B cell (primary cell): ENCODE measurements at regions of chr2 and their contacts with region 1.

Region 1: GRCh38 chr2:182666674-182667314 is 49.3 kb upstream of the DNAJC10 start:
- DNase-seq: peak; percentile 68
- ATAC-seq: peak; percentile 72
- H3K4me3 ChIP-seq: no peak overlapping the region
- H3K4me3 Mint-ChIP-seq: no peak overlapping the region
- H3K27ac ChIP-seq: no peak overlapping the region
- H3K27ac Mint-ChIP-seq: no peak overlapping the region
- H3K4me1 ChIP-seq: peaks cover 4% of the 10 kb centered on the region in 2 donors
- H3K4me1 Mint-ChIP-seq: peaks cover 8% of the 10 kb centered on the region
- H3K27me3 ChIP-seq: no peaks in the 10 kb centered on the region
- H3K27me3 Mint-ChIP-seq: no peaks in the 10 kb centered on the region
- CTCF ChIP-seq: peak; percentile 73

Region 2: DNA sequence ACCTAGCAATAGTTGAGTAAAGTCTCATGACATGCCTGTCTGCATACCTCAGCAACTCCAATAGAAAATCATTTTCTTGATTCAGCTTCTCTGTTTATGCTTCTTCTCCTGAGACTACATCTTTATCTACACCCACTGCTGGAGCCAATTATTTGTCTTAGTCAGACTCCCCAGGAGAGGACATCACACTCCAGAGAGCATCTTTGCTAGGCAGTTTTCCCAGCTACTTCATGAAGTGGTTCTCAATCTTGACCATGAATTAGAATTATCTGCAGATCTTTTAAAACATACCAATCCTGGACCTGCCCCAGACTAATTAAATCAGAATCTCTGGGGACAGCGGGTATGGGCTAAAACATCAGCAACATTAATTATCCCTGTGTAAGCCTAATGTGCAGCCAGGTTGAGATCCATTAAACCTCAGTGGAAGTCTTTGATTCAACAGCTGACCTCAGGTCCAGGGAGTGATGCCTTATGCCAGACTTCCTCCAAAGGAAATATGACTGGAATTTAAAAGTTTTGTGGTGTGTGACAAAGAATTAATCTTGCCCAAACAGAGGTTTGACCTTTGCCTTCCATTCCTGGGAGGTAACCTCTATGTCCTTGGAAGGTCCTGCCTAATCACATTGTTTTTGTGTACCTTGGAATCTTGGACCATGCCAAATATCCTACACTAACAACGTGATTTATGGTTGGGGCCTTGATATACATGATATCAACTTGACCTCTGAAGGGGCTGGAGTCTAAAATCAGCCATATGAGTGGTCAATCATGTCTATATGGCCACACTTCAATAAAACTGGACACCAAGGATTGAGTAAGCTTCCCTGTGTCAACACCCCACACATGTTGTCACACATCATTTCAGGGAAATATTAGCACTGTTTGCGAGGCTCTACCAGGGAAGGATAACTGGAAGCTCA is 50.1 kb before region 1 on chr2:
- CTCF ChIA-PET with region 1: no interaction called
- POLR2A ChIA-PET with region 1: no interaction called
- intact Hi-C with region 1: no loop called
- DNase-seq: no peak
- ATAC-seq: no peak
- H3K4me3 ChIP-seq: no peak overlapping the region
- H3K4me3 Mint-ChIP-seq: no peak overlapping the region
- H3K27ac ChIP-seq: no peak overlapping the region
- H3K27ac Mint-ChIP-seq: no peak overlapping the region
- H3K4me1 ChIP-seq: no peaks in the 10 kb centered on the region
- H3K4me1 Mint-ChIP-seq: no peaks in the 10 kb centered on the region
- H3K27me3 ChIP-seq: no peaks in the 10 kb centered on the region
- H3K27me3 Mint-ChIP-seq: no peaks in the 10 kb centered on the region
- CTCF ChIP-seq: no peak

Region 3: GRCh38 chr2:182740701-182741100 is 73.9 kb after region 1 on chr2:
- CTCF ChIA-PET with region 1: interaction called, 14 read pairs
- POLR2A ChIA-PET with region 1: no interaction called
- intact Hi-C with region 1: loop called (anchors 5 kb)
- DNase-seq: no peak
- ATAC-seq: no peak
- H3K4me3 ChIP-seq: no peak overlapping the region
- H3K4me3 Mint-ChIP-seq: no peak overlapping the region
- H3K27ac ChIP-seq: peak overlapping the region in 1 of 2 donors; percentile 25
- H3K27ac Mint-ChIP-seq: no peak overlapping the region
- H3K4me1 ChIP-seq: no peaks in the 10 kb centered on the region
- H3K4me1 Mint-ChIP-seq: no peaks in the 10 kb centered on the region
- H3K27me3 ChIP-seq: no peaks in the 10 kb centered on the region
- H3K27me3 Mint-ChIP-seq: no peaks in the 10 kb centered on the region
- CTCF ChIP-seq: no peak

Region 4: DNA sequence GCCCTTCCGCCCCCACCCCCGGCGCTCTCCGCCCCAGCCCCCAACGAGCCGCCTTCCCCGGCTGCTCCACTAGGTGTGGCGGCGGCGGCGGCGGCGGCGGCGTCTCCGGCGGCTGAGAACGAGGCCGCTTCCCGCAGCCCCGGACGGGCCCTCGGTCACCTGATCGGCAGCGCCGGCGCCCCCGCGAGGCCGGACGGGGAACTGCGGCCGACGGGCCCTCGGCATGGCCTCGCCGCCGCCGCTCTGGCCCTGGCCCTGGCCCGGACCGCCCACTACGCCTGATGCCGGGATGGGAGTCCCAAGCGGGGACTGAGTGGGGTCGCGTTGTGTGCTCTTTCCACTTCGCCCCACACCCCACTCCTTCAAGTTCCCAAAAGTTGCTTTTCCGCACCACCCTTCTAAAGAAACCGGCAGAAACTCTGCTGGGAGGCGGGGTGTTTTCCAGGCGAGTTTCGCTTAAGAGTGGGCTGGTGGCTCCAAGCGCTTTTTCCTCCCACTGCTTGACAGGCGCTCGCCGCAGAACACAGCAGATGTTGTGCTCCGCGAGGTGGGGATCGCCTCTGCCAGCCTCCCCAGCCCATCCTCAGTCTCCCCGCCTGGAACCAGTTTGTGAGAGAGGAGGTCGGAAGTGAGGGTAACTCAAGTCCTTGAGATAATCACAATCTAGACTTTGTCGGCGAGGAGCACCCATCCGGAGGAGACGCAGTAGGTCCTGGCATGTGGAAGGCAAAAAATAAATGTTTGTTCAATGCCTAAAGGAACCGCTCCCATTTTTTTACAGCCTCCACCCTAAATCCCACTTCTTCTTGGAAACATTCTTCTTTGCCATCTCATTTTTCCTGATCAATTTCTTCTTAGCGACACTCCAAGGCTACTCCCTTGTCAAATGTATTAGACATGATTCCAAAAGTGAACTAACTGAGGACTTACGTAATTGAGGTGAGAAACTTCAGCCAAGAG is 371.8 kb after region 1 on chr2 and contains the start of gene NCKAP1:
- CTCF ChIA-PET with region 1: no interaction called
- POLR2A ChIA-PET with region 1: no interaction called
- intact Hi-C with region 1: loop called (anchors 5 kb)
- DNase-seq: peak; percentile 65
- ATAC-seq: peak; percentile 70
- H3K4me3 ChIP-seq: peak within 1 kb of the TSS in 3 of 5 experiments; percentile 32 to 43 (median 35)
- H3K4me3 Mint-ChIP-seq: peak within 1 kb of the TSS; percentile 74
- H3K27ac ChIP-seq: no peak within 1 kb of the TSS
- H3K27ac Mint-ChIP-seq: peak within 1 kb of the TSS; percentile 41
- H3K4me1 ChIP-seq: peaks cover 22 to 41% of the 10 kb centered on the region in 2 donors
- H3K4me1 Mint-ChIP-seq: peaks cover 27% of the 10 kb centered on the region
- H3K27me3 ChIP-seq: peaks cover 6 to 58% (median 51%) of the 10 kb centered on the region in 4 experiments
- H3K27me3 Mint-ChIP-seq: peaks cover 50% of the 10 kb centered on the region
- CTCF ChIP-seq: peak; percentile 70
- total RNA-seq, gene NCKAP1: 0.05 TPM in 1 of 2 replicates, not detected in the other

Region 5: GRCh38 chr2:183093857-183094657 is 427.3 kb after region 1 on chr2:
- CTCF ChIA-PET with region 1: interaction called, 3 read pairs
- POLR2A ChIA-PET with region 1: no interaction called
- intact Hi-C with region 1: loop called (anchors 1 kb)
- DNase-seq: no peak
- ATAC-seq: no peak
- H3K4me3 ChIP-seq: no peak overlapping the region
- H3K4me3 Mint-ChIP-seq: no peak overlapping the region
- H3K27ac ChIP-seq: no peak overlapping the region
- H3K27ac Mint-ChIP-seq: no peak overlapping the region
- H3K4me1 ChIP-seq: no peaks in the 10 kb centered on the region
- H3K4me1 Mint-ChIP-seq: peaks cover 4% of the 10 kb centered on the region
- H3K27me3 ChIP-seq: no peaks in the 10 kb centered on the region
- H3K27me3 Mint-ChIP-seq: no peaks in the 10 kb centered on the region
- CTCF ChIP-seq: no peak